AG04449 (cell line): ENCODE measurements at regions of chr20 and their contacts with region 1.

Region 1: DNA sequence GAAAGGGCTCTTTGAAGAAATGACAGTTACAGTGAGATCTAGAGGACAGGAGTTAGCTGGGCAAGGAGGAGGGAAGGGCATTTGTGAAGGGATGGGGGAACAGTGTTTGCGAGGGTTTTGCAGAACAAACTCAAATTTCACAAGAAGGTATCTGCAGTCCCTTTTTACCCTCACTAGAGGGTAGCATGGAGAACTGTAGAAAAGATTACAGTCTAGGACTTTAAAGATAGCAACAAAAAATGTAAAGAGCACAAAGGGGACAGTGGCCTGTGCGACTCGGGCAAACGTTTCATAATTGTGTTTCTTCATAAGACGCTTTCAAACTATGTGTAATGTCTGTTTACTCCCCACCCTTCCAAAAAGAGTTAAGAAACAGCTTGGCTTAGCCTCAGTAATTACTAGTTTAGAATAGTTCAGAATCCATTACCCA is 21.2 kb upstream of the ASXL1 start:
- DNase-seq: no peak
- H3K4me3 ChIP-seq: no peak overlapping the region
- CTCF ChIP-seq: peak; percentile 60

Region 2: DNA sequence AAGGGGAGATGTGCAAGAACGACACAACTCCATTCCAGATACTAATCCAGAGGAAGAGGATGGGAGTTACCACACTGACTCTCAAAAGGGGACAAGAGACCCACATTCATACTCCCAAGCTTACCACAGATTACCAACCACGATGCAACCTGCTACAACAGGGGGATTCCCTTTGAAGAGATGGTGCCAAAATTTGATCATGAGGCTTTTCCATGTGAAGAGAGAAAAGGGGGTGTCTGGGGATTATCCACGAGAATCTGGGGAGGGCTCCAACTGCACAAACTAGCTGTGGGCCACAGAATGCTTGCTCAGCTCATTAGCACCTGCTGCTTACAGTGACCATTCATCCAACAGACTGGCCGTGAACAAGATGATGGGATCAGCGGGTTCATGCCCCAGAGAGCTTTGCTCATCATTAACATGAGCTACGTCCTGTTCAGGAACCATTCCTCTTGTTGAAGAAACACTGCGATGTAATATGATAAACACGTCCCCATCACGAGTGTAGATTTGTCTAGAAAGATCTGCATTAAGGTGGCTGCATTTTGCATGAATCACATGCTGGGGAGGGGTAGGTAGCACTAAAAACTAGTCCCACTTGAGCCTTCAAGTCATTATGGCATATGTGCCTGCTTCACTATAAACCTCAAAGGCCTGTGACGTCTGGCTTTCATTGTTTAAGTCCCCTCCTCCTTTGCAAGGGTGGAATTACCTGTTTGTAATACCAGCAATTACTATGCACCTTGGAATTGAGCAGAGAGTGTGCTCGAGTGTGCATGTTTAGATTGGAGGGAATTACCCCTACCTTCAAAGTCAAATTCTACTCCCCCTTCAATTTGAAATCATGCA is 133.4 kb before region 1 on chr20:
- CTCF ChIA-PET with region 1: no interaction called
- POLR2A ChIA-PET with region 1: no interaction called
- DNase-seq: no peak
- H3K4me3 ChIP-seq: no peak overlapping the region
- CTCF ChIP-seq: no peak

Region 3: GRCh38 chr20:32325706-32326503 is 11.0 kb before region 1 on chr20:
- CTCF ChIA-PET with region 1: interaction called, 26 read pairs
- POLR2A ChIA-PET with region 1: no interaction called
- DNase-seq: no peak
- H3K4me3 ChIP-seq: no peak overlapping the region
- CTCF ChIP-seq: no peak

Region 4: DNA sequence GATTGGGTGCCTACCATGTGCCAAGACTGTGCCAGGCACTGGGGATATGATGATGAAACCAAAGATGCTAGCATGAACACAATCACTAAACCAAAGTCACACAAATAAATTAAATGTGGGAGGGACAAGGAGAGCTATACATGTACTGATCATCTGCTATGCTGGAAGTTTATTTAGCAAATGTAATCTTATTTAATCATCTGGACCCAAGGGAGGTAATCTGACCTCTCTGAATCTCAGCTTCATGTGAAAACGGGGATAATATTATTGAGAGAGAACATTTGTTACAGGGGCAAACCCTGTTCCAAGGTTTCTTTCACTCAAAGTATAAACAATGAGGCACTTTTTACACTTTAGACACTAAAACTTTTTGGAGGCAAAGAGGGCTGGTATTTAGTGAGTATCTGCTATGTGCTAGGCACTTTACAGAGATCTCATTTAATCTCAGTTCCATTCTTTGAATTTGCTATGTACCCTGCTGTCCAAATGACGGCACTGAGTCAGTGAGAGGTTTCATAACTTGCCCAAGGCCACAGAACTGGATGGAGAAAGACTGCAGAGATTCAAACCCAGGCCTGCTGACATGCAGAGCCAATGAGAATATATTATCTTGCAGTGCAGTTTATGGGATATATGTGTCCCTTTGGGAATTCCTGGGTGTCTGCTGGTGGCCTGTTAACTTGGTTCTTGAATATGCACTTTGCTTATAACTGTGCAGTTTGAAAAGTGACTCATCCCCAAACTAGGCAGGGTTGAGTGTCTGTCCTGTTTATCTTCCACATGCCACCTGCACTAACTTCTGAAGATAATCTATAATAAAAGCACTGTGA is 17.9 kb after region 1 on chr20:
- CTCF ChIA-PET with region 1: interaction called, 35 read pairs
- POLR2A ChIA-PET with region 1: interaction called, 8 read pairs
- DNase-seq: no peak
- H3K4me3 ChIP-seq: no peak overlapping the region
- CTCF ChIP-seq: no peak